Activated CD4-positive, alpha-beta T cell treated with anti-CD3 and anti-CD28 coated beads, Interleukin-2, amount 10 ng/mL, durations not matched to agents 24 days and 14 days (primary cell): ENCODE measurements at regions of chr2 and their contacts with region 1.

Region 1: GRCh38 chr2:24075915-24076848 is at the start of gene SF3B6:
- DNase-seq: peak; percentile 100
- H3K4me3 Mint-ChIP-seq: peak within 1 kb of the TSS; percentile 95
- H3K27ac Mint-ChIP-seq: peak within 1 kb of the TSS; percentile 96
- H3K4me1 Mint-ChIP-seq: peaks cover 23% of the 10 kb centered on the region
- H3K27me3 Mint-ChIP-seq: no peaks in the 10 kb centered on the region
- total RNA-seq, gene SF3B6: 143 and 154 TPM in 2 replicates

Region 2: GRCh38 chr2:23939987-23940717 is 136.0 kb before region 1 on chr2 and contains the start of gene UBXN2A:
- intact Hi-C with region 1: loop called (anchors 1 kb)
- DNase-seq: peak; percentile 95
- H3K4me3 Mint-ChIP-seq: peak within 1 kb of the TSS; percentile 89
- H3K27ac Mint-ChIP-seq: peak within 1 kb of the TSS; percentile 88
- H3K4me1 Mint-ChIP-seq: peaks cover 20% of the 10 kb centered on the region
- H3K27me3 Mint-ChIP-seq: peaks cover 14% of the 10 kb centered on the region
- total RNA-seq, gene UBXN2A: 11.5 and 13.1 TPM in 2 replicates

Region 3: DNA sequence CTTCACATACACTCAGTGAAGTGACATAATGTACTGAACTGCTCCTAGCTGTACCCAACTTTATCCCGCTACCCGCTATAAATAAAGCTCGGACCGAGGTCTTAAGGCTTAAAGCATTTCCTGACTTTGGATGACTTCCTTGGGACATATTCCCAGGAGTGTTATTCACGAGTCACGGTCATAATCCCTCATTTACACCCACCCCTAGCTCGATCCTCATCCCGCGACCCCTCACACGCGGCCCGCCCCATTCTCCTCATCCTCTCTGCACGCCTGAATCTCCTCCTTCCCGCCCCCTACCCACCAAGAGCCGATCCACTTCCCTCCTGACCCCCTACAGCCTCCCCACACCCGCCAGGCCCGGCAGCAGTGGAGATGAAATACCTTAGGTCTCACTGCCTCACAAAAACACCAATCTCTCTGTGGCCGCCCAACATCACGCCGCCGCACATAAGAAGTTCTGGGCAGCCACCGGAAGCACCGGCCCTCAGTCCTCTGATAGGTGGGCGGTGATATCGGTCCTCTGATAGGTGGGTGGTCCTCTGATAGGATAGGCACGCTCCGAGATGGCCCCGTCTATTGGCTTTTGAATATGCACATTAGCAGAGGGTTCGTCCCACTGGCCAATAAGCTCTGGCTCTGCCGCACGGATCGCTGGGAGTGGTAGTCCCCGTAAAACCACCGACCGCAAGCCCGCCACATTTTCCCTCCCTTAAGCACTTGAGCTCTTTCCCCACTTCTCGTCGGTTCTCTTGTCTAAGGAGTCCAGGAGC is 29.1 kb before region 1 on chr2 and contains the start of gene WDCP:
- intact Hi-C with region 1: loop called (anchors 1 kb)
- DNase-seq: peak; percentile 98
- H3K4me3 Mint-ChIP-seq: peak within 1 kb of the TSS; percentile 99
- H3K27ac Mint-ChIP-seq: peak within 1 kb of the TSS; percentile 97
- H3K4me1 Mint-ChIP-seq: peaks cover 18% of the 10 kb centered on the region
- H3K27me3 Mint-ChIP-seq: peaks cover 7% of the 10 kb centered on the region
- total RNA-seq, gene WDCP: 22.9 and 25.0 TPM in 2 replicates

Region 4: DNA sequence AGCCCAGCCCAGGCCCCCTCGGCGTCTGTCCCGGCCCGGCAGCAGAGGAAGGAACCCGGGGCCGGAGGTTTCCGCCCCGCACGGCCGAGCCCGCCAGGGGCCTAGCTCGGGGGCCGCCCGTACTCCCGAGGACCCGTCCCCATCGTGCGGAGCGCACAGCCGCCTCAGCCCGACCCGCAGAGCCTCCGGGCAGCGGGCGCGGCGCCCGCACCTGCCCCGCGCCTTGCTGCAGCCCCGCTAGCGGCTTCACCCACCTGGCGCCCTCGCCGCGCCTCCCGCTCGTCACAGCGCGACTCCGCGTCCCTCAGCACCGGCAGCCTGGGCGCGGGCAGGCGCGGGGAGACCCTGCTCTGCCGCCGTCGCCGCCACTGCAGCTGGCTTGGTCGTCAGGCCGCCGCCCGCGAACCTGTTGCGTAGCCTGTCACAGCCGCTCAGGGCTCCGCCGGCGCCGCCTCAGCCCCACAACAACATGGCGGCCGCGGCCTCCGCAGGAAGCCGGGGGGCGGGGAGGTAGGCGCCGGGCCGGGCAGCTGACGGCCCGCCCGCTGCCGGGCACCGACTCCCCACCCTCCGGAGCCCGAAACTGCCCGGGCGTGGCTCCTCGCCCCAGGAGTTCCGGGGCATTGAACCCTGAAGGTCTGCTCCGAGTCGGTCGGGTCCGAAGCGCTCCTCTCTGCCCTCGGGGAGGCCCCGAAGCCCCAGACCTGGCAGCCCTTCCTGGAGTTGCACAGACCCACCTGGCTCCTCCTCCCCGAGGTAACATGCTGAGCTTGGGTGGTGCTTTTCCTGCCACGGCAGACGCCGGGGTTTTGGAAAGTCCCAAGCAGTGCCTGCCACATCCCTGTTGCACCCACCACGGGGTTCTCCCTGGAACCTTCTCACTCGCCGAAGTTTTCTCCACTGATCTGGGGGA is 284.1 kb after region 1 on chr2 and contains the start of gene ITSN2:
- intact Hi-C with region 1: loop called (anchors 5 kb)
- DNase-seq: peak; percentile 95
- H3K4me3 Mint-ChIP-seq: peak within 1 kb of the TSS; percentile 88
- H3K27ac Mint-ChIP-seq: peak within 1 kb of the TSS; percentile 90
- H3K4me1 Mint-ChIP-seq: peaks cover 23% of the 10 kb centered on the region
- H3K27me3 Mint-ChIP-seq: no peaks in the 10 kb centered on the region
- total RNA-seq, gene ITSN2: 53.0 and 55.7 TPM in 2 replicates